Thyroid gland (tissue), 4 donors: ENCODE measurements at regions of chr1 and their contacts with region 1.

Region 1: GRCh38 chr1:152189657-152190442 is 30.8 kb upstream of the RPTN start:
- DNase-seq: peak; percentile 65 to 68
- H3K4me3 ChIP-seq: peak overlapping the region in 2 of 3 donors; percentile 16 to 36
- H3K27ac ChIP-seq: no peak overlapping the region
- H3K4me1 ChIP-seq: peaks cover 0 to 4% of the 10 kb centered on the region in 2 donors
- H3K27me3 ChIP-seq: no peaks in the 10 kb centered on the region
- CTCF ChIP-seq: peak; percentile 19 to 76 (median 62)
- POLR2A ChIP-seq: no peak

Region 2: DNA sequence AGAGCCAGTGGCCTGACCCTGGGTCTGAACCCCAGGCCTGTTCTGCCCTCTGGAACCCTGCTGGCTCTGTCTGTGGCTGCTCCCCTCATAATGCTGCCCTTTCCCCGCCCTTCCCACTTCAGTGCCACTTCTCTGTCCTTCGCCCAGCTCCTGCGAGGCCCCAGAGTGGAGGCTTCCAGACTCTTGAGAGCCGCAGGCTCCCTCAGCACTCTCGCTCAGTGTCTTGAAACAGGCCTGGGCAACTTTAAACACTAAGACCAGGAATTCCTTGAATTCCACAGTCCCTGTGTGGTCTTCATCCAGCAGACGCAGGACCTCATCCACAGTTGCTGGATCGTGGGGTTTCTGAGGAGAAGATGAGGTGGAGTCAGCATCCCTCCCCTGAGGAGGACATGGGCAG is 220.7 kb after region 1 on chr1:
- intact Hi-C with region 1: no loop called
- DNase-seq: peak; percentile 66 to 74
- H3K4me3 ChIP-seq: no peak overlapping the region
- H3K27ac ChIP-seq: peak overlapping the region in 2 of 3 donors; percentile 1 to 27
- H3K4me1 ChIP-seq: peaks cover 0 to 11% of the 10 kb centered on the region in 2 donors
- H3K27me3 ChIP-seq: no peaks in the 10 kb centered on the region
- CTCF ChIP-seq: no peak
- POLR2A ChIP-seq: no peak

Region 3: DNA sequence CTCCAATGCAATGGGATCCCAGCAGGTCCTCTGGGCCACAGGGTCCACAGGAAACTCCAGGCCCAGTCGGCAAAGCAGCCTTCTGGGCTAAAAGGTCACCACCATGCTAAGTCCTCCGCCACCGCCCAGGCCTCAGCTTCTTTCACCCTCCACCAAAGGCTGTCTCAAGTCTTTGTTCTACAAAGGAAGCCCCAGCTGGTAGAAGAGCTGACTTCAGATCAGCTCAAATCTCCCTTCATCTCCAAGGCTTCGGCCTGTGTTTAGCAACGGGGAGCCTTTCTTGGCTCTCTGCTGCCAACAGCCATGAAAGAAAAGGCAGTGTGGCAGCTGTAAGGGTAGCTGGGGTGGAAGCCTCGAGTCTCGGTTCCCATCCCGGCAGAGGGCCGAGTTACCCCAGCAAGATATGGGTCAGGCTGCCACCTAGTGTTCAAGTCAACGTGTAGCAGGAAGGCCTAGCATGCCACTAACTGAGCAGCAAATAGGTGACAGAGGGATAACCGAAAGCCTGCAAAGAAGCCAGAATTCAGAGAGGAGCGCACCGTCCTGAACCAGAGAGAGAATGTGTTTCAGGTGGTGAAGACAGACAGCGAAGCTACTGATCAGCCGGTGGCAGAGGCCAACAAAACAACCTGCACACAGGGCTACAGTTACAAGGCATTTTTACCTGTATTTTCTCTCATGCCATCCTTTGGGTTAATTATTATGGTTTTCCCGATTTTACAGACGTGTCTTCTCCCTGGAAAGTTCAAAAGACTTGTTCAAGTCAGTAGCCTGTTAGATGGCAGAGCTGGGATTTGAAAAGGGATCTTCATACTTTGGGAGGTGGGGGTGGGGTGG is 251.0 kb after region 1 on chr1:
- intact Hi-C with region 1: loop called (anchors 5 kb)
- DNase-seq: peak; percentile 68 to 73
- H3K4me3 ChIP-seq: no peak overlapping the region
- H3K27ac ChIP-seq: no peak overlapping the region
- H3K4me1 ChIP-seq: no peaks in the 10 kb centered on the region
- H3K27me3 ChIP-seq: no peaks in the 10 kb centered on the region
- CTCF ChIP-seq: peak; percentile 35 to 83 (median 74)
- POLR2A ChIP-seq: no peak